MCF 10A (cell line): ENCODE measurements at regions of chr12 and their contacts with region 1.

Region 1: GRCh38 chr12:27733052-27733656 is 22.5 kb downstream of the MRPS35 start:
- DNase-seq: peak; percentile 41
- H3K4me3 Mint-ChIP-seq: no peak overlapping the region
- H3K27ac Mint-ChIP-seq: no peak overlapping the region
- H3K4me1 Mint-ChIP-seq: peaks cover 5% of the 10 kb centered on the region
- H3K27me3 Mint-ChIP-seq: no peaks in the 10 kb centered on the region
- CTCF ChIP-seq: peak; percentile 91

Region 2: DNA sequence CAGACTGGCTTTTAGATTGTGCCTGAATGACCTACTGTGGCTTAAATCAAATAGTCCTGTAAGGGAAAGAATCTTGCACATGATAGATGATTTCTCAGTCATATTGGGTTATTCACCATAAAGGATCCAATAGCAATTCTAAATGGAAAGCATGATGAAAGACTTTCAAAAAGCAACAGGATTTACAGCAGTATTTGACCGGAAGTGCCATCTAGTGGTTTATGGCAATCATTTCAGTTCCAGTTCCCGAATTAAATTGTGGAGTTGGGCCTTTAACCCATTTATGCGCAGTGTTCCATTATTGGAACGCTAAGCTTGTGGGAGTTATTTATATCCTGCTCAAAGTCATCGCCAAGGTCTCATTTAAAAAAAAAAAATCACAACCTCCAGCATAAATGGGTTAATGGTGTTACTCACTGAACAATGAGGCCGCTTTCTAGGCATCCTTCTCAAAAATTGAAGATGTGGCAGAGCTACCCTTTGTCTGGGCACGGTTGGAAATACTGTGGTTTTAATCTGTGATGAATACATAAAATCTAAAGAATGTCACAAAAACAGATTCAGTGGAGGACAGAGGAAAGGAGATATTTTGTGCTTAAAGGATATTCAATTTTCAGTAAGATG is 97.7 kb before region 1 on chr12:
- CTCF ChIA-PET with region 1: no interaction called
- POLR2A ChIA-PET with region 1: no interaction called
- intact Hi-C with region 1: no loop called
- DNase-seq: peak; percentile 70
- H3K4me3 Mint-ChIP-seq: no peak overlapping the region
- H3K27ac Mint-ChIP-seq: no peak overlapping the region
- H3K4me1 Mint-ChIP-seq: no peaks in the 10 kb centered on the region
- H3K27me3 Mint-ChIP-seq: no peaks in the 10 kb centered on the region
- CTCF ChIP-seq: peak; percentile 64

Region 3: DNA sequence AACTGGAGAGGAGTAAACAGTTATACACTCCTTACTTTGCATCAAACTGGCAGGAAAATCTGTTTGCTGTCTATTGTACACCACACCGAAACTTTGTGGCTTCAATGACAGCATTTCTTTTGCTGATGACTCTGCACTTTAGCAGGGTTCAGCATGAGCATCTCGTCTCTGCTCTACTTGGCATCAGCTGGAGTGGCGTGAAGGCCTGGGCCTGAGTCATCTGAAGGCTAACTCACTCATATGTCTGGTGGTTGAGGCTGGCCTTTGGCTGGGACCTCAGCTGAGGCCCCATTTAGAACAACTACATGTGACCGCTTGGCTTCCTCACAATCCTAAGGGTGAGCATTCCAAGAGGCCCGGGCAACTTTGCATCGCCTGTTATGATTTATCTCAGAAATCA is 65.6 kb before region 1 on chr12:
- CTCF ChIA-PET with region 1: no interaction called
- POLR2A ChIA-PET with region 1: no interaction called
- intact Hi-C with region 1: no loop called
- DNase-seq: no peak
- H3K4me3 Mint-ChIP-seq: no peak overlapping the region
- H3K27ac Mint-ChIP-seq: no peak overlapping the region
- H3K4me1 Mint-ChIP-seq: no peaks in the 10 kb centered on the region
- H3K27me3 Mint-ChIP-seq: no peaks in the 10 kb centered on the region
- CTCF ChIP-seq: no peak

Region 4: DNA sequence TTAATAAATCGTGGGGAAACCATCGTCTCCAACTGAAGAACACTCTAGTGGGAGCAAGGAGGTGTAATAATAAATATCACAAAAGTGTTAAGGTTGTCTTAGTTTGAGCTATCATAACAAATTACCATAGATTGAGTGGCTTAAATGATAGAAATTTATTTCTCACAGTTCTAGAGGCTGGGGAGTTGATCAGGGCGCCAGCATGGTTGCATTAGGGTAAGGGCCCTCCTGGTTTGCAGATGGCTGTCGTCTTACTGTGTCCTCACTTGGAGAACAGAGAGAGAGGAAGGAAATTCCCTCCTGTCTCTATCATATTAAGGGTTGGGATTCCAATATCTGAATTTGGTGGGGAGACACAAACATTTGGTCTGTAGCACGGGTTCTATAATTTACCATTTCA is 10.4 kb after region 1 on chr12:
- CTCF ChIA-PET with region 1: interaction called, 21 read pairs
- POLR2A ChIA-PET with region 1: interaction called, 10 read pairs
- intact Hi-C with region 1: no loop called
- DNase-seq: no peak
- H3K4me3 Mint-ChIP-seq: no peak overlapping the region
- H3K27ac Mint-ChIP-seq: no peak overlapping the region
- H3K4me1 Mint-ChIP-seq: peaks cover 24% of the 10 kb centered on the region
- H3K27me3 Mint-ChIP-seq: no peaks in the 10 kb centered on the region
- CTCF ChIP-seq: no peak

Region 5: GRCh38 chr12:27779920-27780611 is 46.9 kb after region 1 on chr12 and contains the starts of genes KLHL42 and MANSC4:
- CTCF ChIA-PET with region 1: interaction called, 3 read pairs
- POLR2A ChIA-PET with region 1: interaction called, 6 read pairs
- intact Hi-C with region 1: loop called (anchors 2 kb)
- DNase-seq: peak; percentile 67
- H3K4me3 Mint-ChIP-seq: peak within 1 kb of the TSS; percentile 77
- H3K27ac Mint-ChIP-seq: peak within 1 kb of the TSS; percentile 63
- H3K4me1 Mint-ChIP-seq: peaks cover 21% of the 10 kb centered on the region
- H3K27me3 Mint-ChIP-seq: no peaks in the 10 kb centered on the region
- CTCF ChIP-seq: no peak
- total RNA-seq, gene KLHL42: 32.5 and 37.6 TPM in 2 replicates
- total RNA-seq, gene MANSC4: not detected in 2 replicates

Region 6: DNA sequence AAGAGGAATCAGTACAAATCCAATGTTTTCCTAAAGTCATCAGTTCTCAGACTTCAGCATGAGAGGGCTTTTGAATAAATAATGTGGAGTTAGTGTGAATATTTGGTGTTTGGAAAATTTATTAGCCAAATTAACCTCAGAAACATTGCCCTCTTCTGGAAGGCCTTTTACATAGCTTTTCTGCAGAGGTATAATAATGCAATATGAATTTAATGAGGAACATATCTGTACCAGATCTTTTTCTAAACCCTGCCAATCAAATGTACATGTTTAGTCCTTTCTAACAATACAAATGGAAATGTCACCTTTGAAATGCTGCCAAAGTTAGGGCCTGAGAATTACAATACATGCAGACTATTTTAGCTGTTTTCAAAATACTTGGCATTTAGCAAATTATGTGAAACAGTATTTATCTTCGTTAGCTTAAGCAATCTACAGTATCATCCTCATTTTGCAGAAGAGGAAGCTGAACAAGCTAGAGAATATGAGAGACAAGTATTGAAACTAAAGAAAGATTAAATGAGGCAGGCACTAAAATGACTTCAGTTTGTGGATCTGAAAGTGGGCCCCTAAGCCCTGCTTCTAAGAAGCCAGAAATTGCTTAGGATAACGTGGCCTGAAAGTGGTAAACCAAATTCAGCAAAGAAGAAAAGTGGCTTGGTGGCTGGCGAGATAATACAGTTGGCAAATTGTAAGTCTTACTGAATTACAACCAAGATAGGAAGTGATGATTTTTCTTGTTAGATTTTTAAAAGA is 107.3 kb after region 1 on chr12:
- CTCF ChIA-PET with region 1: interaction called, 9 read pairs
- POLR2A ChIA-PET with region 1: interaction called, 3 read pairs
- intact Hi-C with region 1: loop called (anchors 1 kb)
- DNase-seq: peak; percentile 7
- H3K4me3 Mint-ChIP-seq: no peak overlapping the region
- H3K27ac Mint-ChIP-seq: no peak overlapping the region
- H3K4me1 Mint-ChIP-seq: peaks cover 4% of the 10 kb centered on the region
- H3K27me3 Mint-ChIP-seq: no peaks in the 10 kb centered on the region
- CTCF ChIP-seq: peak; percentile 37

Region 7: DNA sequence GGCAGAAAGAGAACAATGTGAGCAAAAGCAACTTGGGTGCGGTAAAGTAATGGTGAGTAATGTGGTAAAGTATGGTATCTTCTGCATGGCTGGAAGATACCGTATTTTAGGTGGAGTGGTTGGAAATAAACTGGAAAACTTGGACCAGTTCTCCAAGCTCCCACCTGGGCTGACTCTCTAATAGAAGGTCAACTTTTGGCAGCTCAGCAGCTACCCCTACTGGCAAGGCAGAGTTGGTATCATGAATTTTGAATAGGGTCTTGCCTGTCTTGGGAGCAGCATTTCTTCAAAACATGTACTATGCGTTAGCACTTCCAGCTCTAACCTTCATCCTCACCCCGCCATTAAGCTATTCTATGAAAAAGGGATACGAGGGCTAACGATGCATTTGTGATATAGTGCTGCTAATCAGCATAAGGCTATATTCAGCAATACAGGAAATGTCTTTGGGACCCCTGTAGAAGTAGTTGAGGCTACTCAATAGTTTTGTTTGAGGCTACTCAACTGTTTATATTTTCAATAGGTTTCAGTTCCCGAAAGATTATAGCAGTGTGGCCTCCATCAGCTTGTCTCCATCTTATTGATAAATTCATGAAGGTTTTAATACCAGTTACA is 1139.6 kb after region 1 on chr12:
- CTCF ChIA-PET with region 1: interaction called, 11 read pairs
- POLR2A ChIA-PET with region 1: interaction called, 4 read pairs
- intact Hi-C with region 1: loop called (anchors 1 kb)
- DNase-seq: peak; percentile 69
- H3K4me3 Mint-ChIP-seq: no peak overlapping the region
- H3K27ac Mint-ChIP-seq: no peak overlapping the region
- H3K4me1 Mint-ChIP-seq: peaks cover 21% of the 10 kb centered on the region
- H3K27me3 Mint-ChIP-seq: no peaks in the 10 kb centered on the region
- CTCF ChIP-seq: peak; percentile 77

Region 8: DNA sequence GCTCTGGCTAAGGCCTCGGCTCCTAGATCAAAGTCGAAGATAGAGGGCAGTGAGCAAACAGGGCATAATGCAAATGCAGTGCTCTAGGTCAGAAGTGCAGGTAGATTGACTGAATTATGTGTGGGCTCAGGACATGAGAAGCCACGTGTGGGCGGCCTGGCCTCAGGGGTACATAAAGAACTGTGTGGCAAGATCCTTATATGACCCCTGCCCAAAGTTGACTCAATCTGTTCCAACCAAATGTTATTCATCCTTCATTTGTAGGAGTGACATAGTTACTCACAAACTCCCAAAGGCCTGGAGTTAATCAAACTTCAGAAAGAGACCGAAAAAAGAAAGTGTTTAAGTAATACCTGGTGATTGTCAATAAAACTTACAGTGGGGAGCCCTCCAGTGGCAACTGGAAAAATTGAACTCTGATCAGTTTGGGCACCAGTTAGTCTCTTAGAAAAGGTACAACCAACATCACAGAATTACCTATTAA is 1265.5 kb after region 1 on chr12:
- CTCF ChIA-PET with region 1: interaction called, 3 read pairs
- POLR2A ChIA-PET with region 1: no interaction called
- intact Hi-C with region 1: loop called (anchors 10 kb)
- DNase-seq: peak; percentile 46
- H3K4me3 Mint-ChIP-seq: no peak overlapping the region
- H3K27ac Mint-ChIP-seq: no peak overlapping the region
- H3K4me1 Mint-ChIP-seq: peaks cover 5% of the 10 kb centered on the region
- H3K27me3 Mint-ChIP-seq: no peaks in the 10 kb centered on the region
- CTCF ChIP-seq: peak; percentile 58